ENCODE measurements at regions of chr14 and their contacts with region 1.

Region 1: DNA sequence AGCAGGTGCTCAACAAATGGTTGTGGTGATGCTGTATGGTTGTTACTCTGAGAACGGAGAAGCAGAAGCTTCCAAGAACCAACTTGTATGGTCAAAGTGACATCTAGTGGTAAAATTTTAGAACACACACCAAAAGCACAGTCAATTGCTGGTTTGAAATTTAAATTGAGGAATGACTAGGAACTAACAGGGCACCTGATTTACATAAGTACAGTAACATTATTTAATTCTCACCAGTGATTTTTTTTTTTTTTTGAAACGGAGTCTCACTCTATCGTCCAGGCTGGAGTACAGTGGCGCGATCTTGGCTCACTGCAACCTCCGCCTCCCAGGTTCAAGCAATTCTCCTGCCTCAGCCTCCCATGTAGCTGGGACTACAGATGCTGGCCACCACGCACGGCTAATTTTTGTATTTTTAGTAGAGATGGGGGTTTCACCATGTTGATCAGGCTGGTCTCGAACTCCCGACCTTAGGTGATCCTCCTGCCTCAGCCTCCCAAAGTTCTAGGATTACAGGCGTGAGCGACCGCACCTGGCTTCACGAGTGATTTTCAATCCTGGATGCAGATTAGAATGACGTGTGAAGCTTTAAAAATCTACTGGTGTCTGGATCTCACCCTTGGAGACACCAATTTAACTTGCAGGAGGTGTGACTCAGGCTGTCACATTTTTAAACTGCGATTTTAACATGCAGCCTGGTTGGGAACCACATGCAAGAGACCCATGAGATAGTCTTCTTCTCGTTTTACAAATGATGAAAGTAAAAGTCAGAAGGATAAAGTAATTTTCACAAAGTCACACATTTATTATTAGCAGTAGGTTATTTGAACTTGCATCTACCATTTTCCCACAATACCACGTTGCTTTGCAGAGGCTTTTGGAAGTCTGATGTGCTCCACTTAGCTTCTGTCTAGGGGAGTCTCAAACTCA is 14.1 kb upstream of the NUMB start:
- DNase-seq: no peak
- ATAC-seq: peak; percentile 92
- H3K4me3 ChIP-seq: no peak overlapping the region
- H3K4me1 ChIP-seq: peaks cover 10% of the 10 kb centered on the region
- CTCF ChIP-seq: peak; percentile 46

Region 2: DNA sequence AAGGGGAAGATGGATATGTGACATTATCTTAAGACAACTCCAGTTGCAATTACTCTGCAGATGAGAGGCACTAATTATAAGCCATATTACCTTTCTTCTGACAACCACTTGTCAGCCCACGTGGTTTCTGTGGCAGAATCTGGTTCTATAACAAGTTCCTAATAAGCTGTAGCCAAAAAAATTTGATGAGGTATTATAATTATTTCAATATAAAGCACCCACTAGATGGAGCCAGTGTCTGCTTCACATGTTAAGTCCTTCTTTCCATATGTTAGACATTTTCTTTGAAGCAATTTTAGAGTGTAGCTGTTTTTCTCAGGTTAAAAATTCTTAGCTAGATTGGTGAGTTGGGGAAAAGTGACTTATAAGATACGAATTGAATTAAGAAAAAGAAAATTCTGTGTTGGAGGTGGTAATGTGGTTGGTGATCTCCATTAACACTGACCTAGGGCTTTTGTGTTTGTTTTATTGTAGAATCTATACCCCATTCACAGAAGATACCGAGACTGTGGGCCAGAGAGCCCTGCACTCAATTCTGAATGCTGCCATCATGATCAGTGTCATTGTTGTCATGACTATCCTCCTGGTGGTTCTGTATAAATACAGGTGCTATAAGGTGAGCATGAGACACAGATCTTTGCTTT is 299.2 kb before region 1 on chr14:
- intact Hi-C with region 1: loop called in 1 of 2 experiments (anchors 10 kb)
- DNase-seq: no peak
- ATAC-seq: no peak
- H3K4me3 ChIP-seq: no peak overlapping the region
- H3K4me1 ChIP-seq: no peaks in the 10 kb centered on the region
- CTCF ChIP-seq: no peak

Region 3: GRCh38 chr14:73198253-73198652 is 274.2 kb before region 1 on chr14:
- intact Hi-C with region 1: no loop called
- DNase-seq: no peak
- ATAC-seq: no peak
- H3K4me3 ChIP-seq: no peak overlapping the region
- H3K4me1 ChIP-seq: no peaks in the 10 kb centered on the region
- CTCF ChIP-seq: no peak

Region 4: DNA sequence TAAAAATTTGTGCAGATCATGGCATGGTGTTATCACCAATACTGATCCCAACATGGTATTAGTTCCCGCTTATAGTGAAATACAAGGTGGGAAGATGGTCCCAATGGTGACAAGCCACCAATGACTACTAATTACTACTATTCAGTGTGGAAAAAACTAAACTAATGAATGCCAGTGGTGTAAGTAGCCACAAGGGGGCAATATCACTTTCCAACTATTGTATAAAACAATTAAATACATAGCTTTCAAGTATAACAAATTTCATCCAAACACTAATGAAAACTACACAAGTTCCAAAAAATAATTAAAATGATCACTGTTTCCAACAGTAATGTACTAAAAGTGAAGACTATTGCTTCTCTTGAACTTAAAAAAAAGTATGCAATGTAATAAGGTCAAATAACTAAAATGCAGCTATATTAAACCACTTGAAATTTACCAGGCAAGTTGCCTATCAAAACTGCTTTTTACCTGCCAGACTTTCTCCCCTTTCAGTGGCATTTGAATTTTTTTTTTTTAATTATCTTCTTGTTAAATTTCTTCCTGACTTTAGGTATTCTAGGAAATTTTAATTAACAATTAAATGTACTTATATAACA is 177.2 kb before region 1 on chr14:
- intact Hi-C with region 1: loop called (anchors 5 kb)
- DNase-seq: peak in 1 of 3 donors; percentile 64
- ATAC-seq: peak; percentile 55
- H3K4me3 ChIP-seq: no peak overlapping the region
- H3K4me1 ChIP-seq: peaks cover 43% of the 10 kb centered on the region
- CTCF ChIP-seq: peak; percentile 33

Region 5: DNA sequence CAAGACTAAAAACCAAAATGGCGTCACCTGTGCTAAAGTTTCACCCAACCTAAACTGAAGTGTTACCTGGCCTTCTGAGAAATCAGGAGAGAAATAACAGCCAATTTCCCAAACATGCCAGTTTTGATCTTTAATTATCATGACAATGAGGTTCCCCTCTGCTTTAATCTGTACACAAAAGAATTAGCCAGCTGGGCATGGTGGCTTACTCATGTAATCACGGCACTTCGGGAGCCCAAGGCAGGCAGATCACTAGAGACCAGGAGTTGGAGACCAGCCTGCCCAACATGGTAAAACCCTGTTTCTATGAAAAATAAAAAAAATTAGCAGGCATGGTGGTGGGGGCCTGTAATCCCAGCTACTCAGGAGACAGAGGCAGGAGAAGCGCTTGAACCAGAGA is 81.4 kb after region 1 on chr14:
- intact Hi-C with region 1: no loop called
- DNase-seq: no peak
- ATAC-seq: no peak
- H3K4me3 ChIP-seq: no peak overlapping the region
- H3K4me1 ChIP-seq: no peaks in the 10 kb centered on the region
- CTCF ChIP-seq: no peak

Region 6: DNA sequence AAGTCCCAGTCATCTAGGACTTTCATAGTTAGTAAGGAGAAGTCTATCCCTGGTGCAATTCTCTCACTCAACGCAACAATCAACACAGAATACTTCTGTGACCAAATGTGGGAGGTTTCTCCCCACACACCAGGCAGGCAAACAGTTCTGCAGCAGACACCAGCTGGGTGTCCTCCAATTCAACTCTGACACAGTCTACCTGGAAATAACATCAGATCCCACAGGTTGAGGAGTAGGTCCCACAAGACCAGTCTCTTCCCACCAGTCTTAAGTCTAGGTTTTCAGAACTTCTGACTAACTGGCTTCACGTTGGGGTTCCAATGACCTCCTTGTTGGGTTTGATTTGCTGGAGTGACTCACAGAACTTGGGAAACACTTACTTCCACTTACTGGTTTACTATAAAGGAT is 154.7 kb after region 1 on chr14:
- intact Hi-C with region 1: no loop called
- DNase-seq: no peak
- ATAC-seq: no peak
- H3K4me3 ChIP-seq: no peak overlapping the region
- H3K4me1 ChIP-seq: no peaks in the 10 kb centered on the region
- CTCF ChIP-seq: no peak

Region 7: GRCh38 chr14:74207947-74208346 is 735.5 kb after region 1 on chr14:
- intact Hi-C with region 1: no loop called
- DNase-seq: peak in 1 of 3 donors; percentile 8
- ATAC-seq: no peak
- H3K4me3 ChIP-seq: no peak overlapping the region
- H3K4me1 ChIP-seq: no peaks in the 10 kb centered on the region
- CTCF ChIP-seq: no peak